ENCODE measurements at regions of chrX and their contacts with region 1.

Region 1: GRCh38 chrX:13734278-13735172 is at the starts of genes OFD1 and TRAPPC2:
- DNase-seq: peak; percentile 88
- H3K4me3 Mint-ChIP-seq: peak within 1 kb of the TSS; percentile 97
- H3K27ac Mint-ChIP-seq: peak within 1 kb of the TSS; percentile 98
- H3K4me1 Mint-ChIP-seq: peaks cover 49% of the 10 kb centered on the region
- H3K27me3 Mint-ChIP-seq: peaks cover 2% of the 10 kb centered on the region
- total RNA-seq, gene OFD1: 21.9 and 22.0 TPM in 2 replicates
- total RNA-seq, gene TRAPPC2: 16.4 and 16.5 TPM in 2 replicates

Region 2: GRCh38 chrX:11758400-11759171 is 1975.9 kb before region 1 on chrX:
- intact Hi-C with region 1: loop called (anchors 10 kb)
- DNase-seq: peak; percentile 84
- H3K4me3 Mint-ChIP-seq: peak overlapping the region; percentile 98
- H3K27ac Mint-ChIP-seq: peak overlapping the region; percentile 98
- H3K4me1 Mint-ChIP-seq: peaks cover 18% of the 10 kb centered on the region
- H3K27me3 Mint-ChIP-seq: peaks cover 25% of the 10 kb centered on the region

Region 3: GRCh38 chrX:12974796-12975669 is 759.5 kb before region 1 on chrX and contains the start of gene TMSB4X:
- intact Hi-C with region 1: loop called (anchors 10 kb)
- DNase-seq: peak; percentile 83
- H3K4me3 Mint-ChIP-seq: peak within 1 kb of the TSS; percentile 97
- H3K27ac Mint-ChIP-seq: peak within 1 kb of the TSS; percentile 98
- H3K4me1 Mint-ChIP-seq: peaks cover 50% of the 10 kb centered on the region
- H3K27me3 Mint-ChIP-seq: no peaks in the 10 kb centered on the region
- total RNA-seq, gene TMSB4X: 6,544 and 6,612 TPM in 2 replicates

Region 4: DNA sequence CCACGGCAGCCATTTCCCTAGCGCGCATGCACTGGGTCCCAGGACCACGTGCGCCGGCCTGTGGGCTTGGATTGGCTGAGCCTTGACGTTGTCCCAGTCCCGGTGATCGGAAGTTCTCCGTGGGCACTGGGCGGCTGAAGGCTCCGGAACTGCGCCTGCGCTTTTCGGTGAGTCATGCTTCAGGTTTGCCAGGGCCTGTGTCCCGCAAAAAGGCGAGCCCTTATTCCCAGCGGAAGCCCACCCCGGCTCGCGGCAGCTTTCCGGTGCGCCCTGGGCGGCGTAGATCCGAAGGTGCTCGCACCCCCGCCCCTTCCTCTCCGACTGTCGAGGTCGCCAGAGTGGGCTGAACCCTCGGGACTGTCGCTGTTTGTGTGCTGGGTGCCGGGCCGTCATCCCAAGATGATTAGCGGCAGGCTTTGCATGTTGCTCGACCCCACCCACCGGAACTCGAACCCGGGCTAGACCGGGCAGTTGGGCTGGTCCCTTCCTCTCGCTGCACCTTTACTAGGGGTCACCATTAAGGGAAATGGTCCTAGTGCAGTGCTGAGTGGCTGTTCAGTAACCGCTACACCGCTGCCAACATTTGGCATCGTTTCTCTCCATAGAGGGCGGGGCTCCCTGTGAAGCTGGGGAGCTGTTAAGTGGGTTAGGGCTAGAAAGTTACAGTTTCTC is 81.4 kb before region 1 on chrX and contains the start of gene TCEANC:
- intact Hi-C with region 1: loop called (anchors 1 kb)
- DNase-seq: peak; percentile 91
- H3K4me3 Mint-ChIP-seq: peak within 1 kb of the TSS; percentile 88
- H3K27ac Mint-ChIP-seq: peak within 1 kb of the TSS; percentile 92
- H3K4me1 Mint-ChIP-seq: peaks cover 20% of the 10 kb centered on the region
- H3K27me3 Mint-ChIP-seq: no peaks in the 10 kb centered on the region
- total RNA-seq, gene TCEANC: 3.9 and 5.0 TPM in 2 replicates

Region 5: GRCh38 chrX:13688958-13689740 is 45.4 kb before region 1 on chrX and contains the start of gene RAB9A:
- intact Hi-C with region 1: loop called (anchors 1 kb)
- DNase-seq: peak; percentile 76
- H3K4me3 Mint-ChIP-seq: peak within 1 kb of the TSS; percentile 89
- H3K27ac Mint-ChIP-seq: peak within 1 kb of the TSS; percentile 95
- H3K4me1 Mint-ChIP-seq: peaks cover 51% of the 10 kb centered on the region
- H3K27me3 Mint-ChIP-seq: no peaks in the 10 kb centered on the region
- total RNA-seq, gene RAB9A: 9.4 and 11.8 TPM in 2 replicates

Region 6: GRCh38 chrX:15335135-15336022 is 1600.9 kb after region 1 on chrX and contains the start of gene PIGA:
- intact Hi-C with region 1: loop called (anchors 10 kb)
- DNase-seq: peak; percentile 89
- H3K4me3 Mint-ChIP-seq: peak within 1 kb of the TSS; percentile 91
- H3K27ac Mint-ChIP-seq: peak within 1 kb of the TSS; percentile 88
- H3K4me1 Mint-ChIP-seq: peaks cover 14% of the 10 kb centered on the region
- H3K27me3 Mint-ChIP-seq: no peaks in the 10 kb centered on the region
- total RNA-seq, gene PIGA: 23.9 and 25.4 TPM in 2 replicates

Measured in activated T-helper 1 cell treated with anti-CD3 and anti-CD28 coated beads, Interleukin-12 subunit alpha, Interleukin-12 subunit beta, Interleukin-2, Interleukin-4 antibody, amounts not matched to agents 30 ng/mL and 10 ng/mL and 1 ng/mL, durations not matched to agents 14 hours and 24 hours and 36 hours (primary cell).